Heart left ventricle (tissue), 16 donors: ENCODE measurements at regions of chr11 and their contacts with region 1.

Region 1: DNA sequence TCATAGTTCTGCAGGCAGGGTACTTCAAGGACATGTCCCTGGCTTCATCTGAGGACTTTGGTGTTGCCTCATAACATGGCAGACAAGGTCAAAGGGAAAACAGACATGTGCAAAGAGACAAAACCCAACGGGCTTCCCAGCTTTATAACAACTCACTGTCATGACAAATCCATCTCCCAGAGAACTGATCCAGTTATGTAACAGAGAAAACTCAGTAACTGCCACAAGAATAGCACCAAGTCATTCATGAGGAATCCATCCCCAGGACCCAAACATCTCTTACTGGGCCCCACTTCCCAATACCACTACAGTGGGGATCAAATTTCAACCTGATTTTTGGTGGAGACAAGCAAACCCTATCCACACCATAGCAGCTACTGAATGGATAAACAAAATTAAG is 13.0 kb downstream of the OR52N4 start:
- DNase-seq: no peak
- ATAC-seq: no peak
- H3K4me3 ChIP-seq: no peak overlapping the region
- H3K27ac ChIP-seq: no peak overlapping the region
- H3K4me1 ChIP-seq: no peaks in the 10 kb centered on the region
- H3K27me3 ChIP-seq: no peaks in the 10 kb centered on the region
- CTCF ChIP-seq: no peak
- POLR2A ChIP-seq: no peak

Region 2: GRCh38 chr11:5618807-5619206 is 148.2 kb before region 1 on chr11:
- intact Hi-C with region 1: no loop called
- DNase-seq: no peak
- ATAC-seq: no peak
- H3K4me3 ChIP-seq: no peak overlapping the region
- H3K27ac ChIP-seq: no peak overlapping the region
- H3K4me1 ChIP-seq: peaks cover 0 to 18% (median 7%) of the 10 kb centered on the region in 12 donors
- H3K27me3 ChIP-seq: no peaks in the 10 kb centered on the region
- CTCF ChIP-seq: no peak
- POLR2A ChIP-seq: no peak

Region 3: DNA sequence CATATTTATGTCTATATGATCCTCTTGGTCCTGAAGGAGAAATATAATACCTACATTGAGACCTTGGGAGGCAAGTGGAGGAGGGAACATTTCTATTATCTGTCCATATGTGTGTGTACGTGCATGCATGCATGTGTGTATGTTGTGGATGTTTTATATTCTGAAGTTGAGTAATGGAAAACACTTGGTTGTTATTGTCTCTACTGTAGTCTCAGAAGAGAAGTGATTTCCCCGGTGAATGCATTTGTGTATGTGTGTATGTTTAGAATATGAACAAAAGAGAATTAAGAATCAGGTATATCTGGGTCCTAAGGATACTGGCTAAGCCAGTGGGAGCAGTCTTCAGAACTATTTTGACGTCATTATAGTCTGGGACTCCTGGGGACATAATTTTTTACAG is 24.1 kb after region 1 on chr11 and contains the start of gene OR52N1:
- intact Hi-C with region 1: loop called in 3 of 10 experiments (anchors 1 to 2 kb)
- DNase-seq: no peak
- ATAC-seq: no peak
- H3K4me3 ChIP-seq: no peak within 1 kb of the TSS
- H3K27ac ChIP-seq: no peak within 1 kb of the TSS
- H3K4me1 ChIP-seq: no peaks in the 10 kb centered on the region
- H3K27me3 ChIP-seq: no peaks in the 10 kb centered on the region
- CTCF ChIP-seq: no peak
- POLR2A ChIP-seq: no peak
- total RNA-seq, gene OR52N1: 0.21 TPM in 1 of 9 donors, not detected in the others